AG04450 (cell line): ENCODE measurements at regions of chr9 and their contacts with region 1.

Region 1: GRCh38 chr9:32579706-32580331 is 6.9 kb upstream of the NDUFB6 start:
- DNase-seq: peak; percentile 2
- H3K4me3 ChIP-seq: no peak overlapping the region
- H3K27ac ChIP-seq: no peak overlapping the region
- H3K27me3 ChIP-seq: no peaks in the 10 kb centered on the region
- CTCF ChIP-seq: peak; percentile 96

Region 2: DNA sequence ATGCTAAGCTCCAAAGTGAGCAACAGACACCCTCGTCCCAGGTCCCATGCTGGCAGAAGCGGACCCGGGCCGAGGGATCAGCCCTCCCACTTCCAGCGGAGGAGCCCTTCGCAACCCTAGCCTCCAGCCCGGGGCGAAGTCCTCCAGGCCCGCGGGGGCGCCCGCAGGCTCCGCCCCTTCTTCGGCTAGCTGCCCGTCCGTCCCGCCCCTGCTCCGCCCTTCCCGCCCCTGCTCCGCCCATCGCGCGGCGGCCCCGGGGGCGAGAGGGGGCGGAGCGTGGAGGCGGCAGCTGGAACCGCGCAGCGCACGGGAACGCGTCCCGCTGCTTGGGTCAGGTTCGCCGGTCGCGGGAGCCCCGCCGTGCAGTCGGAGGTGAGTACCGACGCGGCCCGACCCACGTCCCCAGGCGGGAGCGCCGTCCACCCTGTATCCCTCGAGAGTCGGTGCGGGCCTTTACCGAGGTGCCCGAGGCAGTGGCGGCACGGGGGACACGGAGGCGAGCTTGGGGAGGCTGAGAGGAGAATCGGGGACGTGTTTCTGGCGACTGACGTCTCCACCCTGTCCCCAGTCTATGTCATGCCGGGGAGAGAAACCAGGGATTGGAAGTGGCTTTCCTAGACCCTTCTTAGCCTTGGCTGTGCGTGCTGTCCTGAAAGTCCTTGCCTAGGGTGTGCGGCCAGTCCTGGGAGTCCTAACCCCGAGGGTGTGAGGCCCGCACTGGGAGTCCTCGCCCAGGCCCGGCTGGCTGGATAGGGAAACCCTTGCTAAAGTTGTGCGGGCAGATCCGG is 195.3 kb before region 1 on chr9 and contains the start of gene ACO1:
- CTCF ChIA-PET with region 1: interaction called, 1,261 read pairs
- POLR2A ChIA-PET with region 1: interaction called, 7 read pairs
- DNase-seq: peak; percentile 65
- H3K4me3 ChIP-seq: peak within 1 kb of the TSS; percentile 95
- H3K27ac ChIP-seq: peak within 1 kb of the TSS; percentile 71
- H3K27me3 ChIP-seq: no peaks in the 10 kb centered on the region
- CTCF ChIP-seq: no peak
- polyA plus RNA-seq, gene ACO1: 291 and 330 TPM in 2 replicates

Region 3: DNA sequence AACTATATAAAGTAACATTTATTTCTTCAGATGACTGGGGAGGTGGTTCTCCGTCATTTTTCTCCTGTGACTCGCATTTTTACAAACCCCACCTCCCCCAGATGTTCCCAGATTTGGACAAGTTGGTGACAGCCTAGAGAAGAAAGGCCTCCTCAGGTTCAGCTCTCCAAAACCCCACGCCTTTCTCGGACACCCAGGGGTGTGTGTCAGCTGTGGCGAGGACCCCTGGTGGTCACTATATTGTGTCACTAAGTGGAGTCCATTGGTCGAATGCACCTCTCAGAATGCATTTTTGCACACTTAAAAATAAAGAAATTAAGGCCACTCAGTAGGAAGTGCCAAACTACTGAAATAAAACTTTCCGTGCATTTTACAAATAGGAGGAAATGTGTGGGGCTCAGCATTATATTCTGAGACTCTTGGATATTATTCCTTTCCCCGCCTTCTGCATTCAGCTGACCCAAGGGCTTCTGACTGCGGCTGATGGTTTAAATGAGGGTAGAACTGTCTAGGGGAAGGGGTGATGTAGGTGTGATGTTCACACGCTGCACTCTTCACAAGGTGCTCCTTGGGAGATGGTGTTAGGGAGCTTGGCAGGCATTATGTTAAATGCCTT is 147.8 kb before region 1 on chr9:
- CTCF ChIA-PET with region 1: interaction called, 13 read pairs
- POLR2A ChIA-PET with region 1: no interaction called
- DNase-seq: no peak
- H3K4me3 ChIP-seq: no peak overlapping the region
- H3K27ac ChIP-seq: no peak overlapping the region
- H3K27me3 ChIP-seq: no peaks in the 10 kb centered on the region
- CTCF ChIP-seq: peak; percentile 63

Region 4: GRCh38 chr9:32543047-32543446 is 36.8 kb before region 1 on chr9:
- CTCF ChIA-PET with region 1: interaction called, 18 read pairs
- POLR2A ChIA-PET with region 1: no interaction called
- DNase-seq: no peak
- H3K4me3 ChIP-seq: no peak overlapping the region
- H3K27ac ChIP-seq: no peak overlapping the region
- H3K27me3 ChIP-seq: no peaks in the 10 kb centered on the region
- CTCF ChIP-seq: no peak

Region 5: DNA sequence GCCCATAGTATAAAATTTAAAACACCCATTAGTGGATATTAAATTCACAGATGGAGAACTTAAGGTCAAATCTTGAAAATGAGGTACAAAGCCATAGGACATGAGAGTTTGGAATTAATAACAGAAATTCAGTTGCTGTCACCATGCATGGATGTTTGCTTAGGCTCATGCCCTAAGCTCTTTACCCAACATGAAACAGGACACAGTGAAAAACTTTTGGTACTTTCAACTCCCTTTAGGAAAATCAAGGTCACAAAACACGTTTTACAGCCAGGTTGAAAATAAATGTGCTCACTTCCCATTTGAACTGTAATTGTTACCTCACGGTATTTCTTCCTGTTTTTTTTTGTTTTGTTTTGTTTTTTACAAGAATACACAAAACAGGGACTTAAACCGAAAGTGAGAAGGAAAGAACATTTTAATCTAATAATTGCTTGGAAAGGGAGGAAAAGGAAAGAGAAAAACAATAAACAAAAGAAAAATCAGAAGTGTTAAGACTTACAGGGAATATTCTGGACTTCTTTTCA is 21.3 kb before region 1 on chr9:
- CTCF ChIA-PET with region 1: interaction called, 24 read pairs
- POLR2A ChIA-PET with region 1: no interaction called
- DNase-seq: no peak
- H3K4me3 ChIP-seq: no peak overlapping the region
- H3K27ac ChIP-seq: no peak overlapping the region
- H3K27me3 ChIP-seq: no peaks in the 10 kb centered on the region
- CTCF ChIP-seq: no peak

Region 6: GRCh38 chr9:32618261-32618660 is 38.4 kb after region 1 on chr9:
- CTCF ChIA-PET with region 1: interaction called, 11 read pairs
- POLR2A ChIA-PET with region 1: no interaction called
- DNase-seq: no peak
- H3K4me3 ChIP-seq: no peak overlapping the region
- H3K27ac ChIP-seq: no peak overlapping the region
- H3K27me3 ChIP-seq: no peaks in the 10 kb centered on the region
- CTCF ChIP-seq: no peak

Region 7: GRCh38 chr9:32968101-32969011 is 388.5 kb after region 1 on chr9:
- CTCF ChIA-PET with region 1: interaction called, 354 read pairs
- POLR2A ChIA-PET with region 1: interaction called, 4 read pairs
- DNase-seq: no peak
- H3K4me3 ChIP-seq: no peak overlapping the region
- H3K27ac ChIP-seq: no peak overlapping the region
- H3K27me3 ChIP-seq: no peaks in the 10 kb centered on the region
- CTCF ChIP-seq: peak; percentile 81